B cell (primary cell): ENCODE measurements at regions of chr10 and their contacts with region 1.

Region 1: GRCh38 chr10:7410862-7411670 is at the start of gene SFMBT2:
- DNase-seq: peak; percentile 79
- ATAC-seq: peak; percentile 67
- H3K4me3 ChIP-seq: peak within 1 kb of the TSS; percentile 58 to 85 (median 75)
- H3K4me3 Mint-ChIP-seq: peak within 1 kb of the TSS; percentile 93
- H3K27ac ChIP-seq: no peak within 1 kb of the TSS
- H3K27ac Mint-ChIP-seq: peak within 1 kb of the TSS; percentile 83
- H3K4me1 ChIP-seq: peaks cover 20 to 35% of the 10 kb centered on the region in 2 donors
- H3K4me1 Mint-ChIP-seq: peaks cover 43% of the 10 kb centered on the region
- H3K27me3 ChIP-seq: peaks cover 0 to 21% (median 11%) of the 10 kb centered on the region in 4 experiments
- H3K27me3 Mint-ChIP-seq: peaks cover 10% of the 10 kb centered on the region
- CTCF ChIP-seq: no peak
- total RNA-seq, gene SFMBT2: 24.0 and 26.5 TPM in 2 replicates

Region 2: DNA sequence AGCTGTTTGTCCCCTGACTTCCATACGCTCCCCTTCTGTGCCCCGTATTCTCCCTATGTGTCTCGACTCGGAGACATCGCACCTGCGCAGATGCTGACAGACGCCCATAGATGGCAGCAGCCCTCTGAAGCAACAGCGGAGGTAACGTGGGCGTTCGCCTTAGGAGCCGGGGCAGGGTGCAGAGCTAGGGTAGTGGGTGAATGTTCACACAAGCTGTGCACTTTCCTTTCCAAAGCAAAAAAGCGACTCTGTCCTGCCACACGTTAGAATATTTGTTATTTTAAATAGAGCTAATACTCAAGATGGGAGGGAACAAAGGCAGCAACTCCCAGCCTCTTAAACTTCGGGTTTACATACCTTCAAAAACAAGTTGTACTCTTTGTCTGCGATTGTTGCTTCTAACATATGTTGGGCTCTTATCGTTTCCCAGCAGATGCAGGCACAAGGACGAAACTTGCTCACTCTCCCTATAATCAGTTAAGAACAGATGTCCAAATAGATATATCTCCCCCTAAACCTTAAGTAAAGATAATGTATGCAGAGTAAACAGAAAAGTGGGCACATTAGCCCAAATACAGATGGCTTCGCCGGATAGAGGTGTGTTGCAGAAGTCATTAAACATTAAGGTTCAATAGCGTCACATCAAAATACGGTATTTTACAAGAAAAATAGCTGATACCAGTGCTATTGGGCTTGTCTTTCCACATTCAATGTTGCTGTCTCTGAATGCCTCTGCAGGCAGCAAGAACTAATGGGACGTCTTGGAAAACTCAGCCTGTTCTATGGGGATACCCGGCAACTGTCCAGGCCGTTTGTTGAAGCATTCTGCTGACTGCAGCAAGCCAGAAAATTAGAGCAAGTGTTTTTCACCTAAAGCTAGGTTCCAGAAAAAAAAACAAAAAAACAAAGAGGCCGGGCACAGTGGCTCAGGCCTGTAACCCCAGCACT is 490.7 kb before region 1 on chr10:
- CTCF ChIA-PET with region 1: interaction called, 32 read pairs
- POLR2A ChIA-PET with region 1: interaction called, 3 read pairs
- intact Hi-C with region 1: no loop called
- DNase-seq: peak; percentile 81
- ATAC-seq: peak; percentile 97
- H3K4me3 ChIP-seq: peak overlapping the region in 1 of 5 experiments; percentile 9
- H3K4me3 Mint-ChIP-seq: no peak overlapping the region
- H3K27ac ChIP-seq: no peak overlapping the region
- H3K27ac Mint-ChIP-seq: no peak overlapping the region
- H3K4me1 ChIP-seq: peaks cover 8 to 27% of the 10 kb centered on the region in 2 donors
- H3K4me1 Mint-ChIP-seq: peaks cover 24% of the 10 kb centered on the region
- H3K27me3 ChIP-seq: no peaks in the 10 kb centered on the region
- H3K27me3 Mint-ChIP-seq: no peaks in the 10 kb centered on the region
- CTCF ChIP-seq: peak; percentile 80

Region 3: GRCh38 chr10:7260412-7260900 is 150.6 kb before region 1 on chr10:
- CTCF ChIA-PET with region 1: interaction called, 20 read pairs
- POLR2A ChIA-PET with region 1: interaction called, 4 read pairs
- intact Hi-C with region 1: loop called (anchors 1 kb)
- DNase-seq: peak; percentile 71
- ATAC-seq: peak; percentile 80
- H3K4me3 ChIP-seq: no peak overlapping the region
- H3K4me3 Mint-ChIP-seq: no peak overlapping the region
- H3K27ac ChIP-seq: no peak overlapping the region
- H3K27ac Mint-ChIP-seq: no peak overlapping the region
- H3K4me1 ChIP-seq: peaks cover 13 to 23% of the 10 kb centered on the region in 2 donors
- H3K4me1 Mint-ChIP-seq: peaks cover 28% of the 10 kb centered on the region
- H3K27me3 ChIP-seq: no peaks in the 10 kb centered on the region
- H3K27me3 Mint-ChIP-seq: no peaks in the 10 kb centered on the region
- CTCF ChIP-seq: peak; percentile 75

Region 4: GRCh38 chr10:7445474-7446185 is 34.6 kb after region 1 on chr10:
- CTCF ChIA-PET with region 1: no interaction called
- POLR2A ChIA-PET with region 1: interaction called, 4 read pairs
- intact Hi-C with region 1: loop called (anchors 5 kb)
- DNase-seq: peak; percentile 61
- ATAC-seq: peak; percentile 74
- H3K4me3 ChIP-seq: peak overlapping the region in 1 of 5 experiments; percentile 31
- H3K4me3 Mint-ChIP-seq: peak overlapping the region; percentile 68
- H3K27ac ChIP-seq: peak overlapping the region; percentile 21 to 64
- H3K27ac Mint-ChIP-seq: peak overlapping the region; percentile 57
- H3K4me1 ChIP-seq: peaks cover 22 to 28% of the 10 kb centered on the region in 2 donors
- H3K4me1 Mint-ChIP-seq: peaks cover 26% of the 10 kb centered on the region
- H3K27me3 ChIP-seq: no peaks in the 10 kb centered on the region
- H3K27me3 Mint-ChIP-seq: no peaks in the 10 kb centered on the region
- CTCF ChIP-seq: no peak

Region 5: GRCh38 chr10:7525314-7526016 is 114.4 kb after region 1 on chr10:
- CTCF ChIA-PET with region 1: interaction called, 12 read pairs
- POLR2A ChIA-PET with region 1: no interaction called
- intact Hi-C with region 1: no loop called
- DNase-seq: peak; percentile 75
- ATAC-seq: peak; percentile 77
- H3K4me3 ChIP-seq: no peak overlapping the region
- H3K4me3 Mint-ChIP-seq: no peak overlapping the region
- H3K27ac ChIP-seq: no peak overlapping the region
- H3K27ac Mint-ChIP-seq: no peak overlapping the region
- H3K4me1 ChIP-seq: peaks cover 5 to 8% of the 10 kb centered on the region in 2 donors
- H3K4me1 Mint-ChIP-seq: peaks cover 14% of the 10 kb centered on the region
- H3K27me3 ChIP-seq: peaks cover 0 to 1% (median 0%) of the 10 kb centered on the region in 4 experiments
- H3K27me3 Mint-ChIP-seq: peaks cover 16% of the 10 kb centered on the region
- CTCF ChIP-seq: peak; percentile 87

Region 6: GRCh38 chr10:9274206-9274755 is 1863.2 kb after region 1 on chr10:
- CTCF ChIA-PET with region 1: no interaction called
- POLR2A ChIA-PET with region 1: no interaction called
- intact Hi-C with region 1: no loop called
- DNase-seq: no peak
- ATAC-seq: no peak
- H3K4me3 ChIP-seq: no peak overlapping the region
- H3K4me3 Mint-ChIP-seq: no peak overlapping the region
- H3K27ac ChIP-seq: no peak overlapping the region
- H3K27ac Mint-ChIP-seq: no peak overlapping the region
- H3K4me1 ChIP-seq: no peaks in the 10 kb centered on the region
- H3K4me1 Mint-ChIP-seq: no peaks in the 10 kb centered on the region
- H3K27me3 ChIP-seq: no peaks in the 10 kb centered on the region
- H3K27me3 Mint-ChIP-seq: no peaks in the 10 kb centered on the region
- CTCF ChIP-seq: no peak